K562 (cell line): ENCODE measurements at regions of chr15 and their contacts with region 1.

Region 1: GRCh38 chr15:99104788-99105513 is at the start of gene SYNM:
- DNase-seq: peak; percentile 56 to 85 (median 84)
- ATAC-seq: peak; percentile 93
- H3K4me3 ChIP-seq: peak within 1 kb of the TSS; percentile 8; the same call in 1 of the 2 replicates
- H3K27ac ChIP-seq: no peak within 1 kb of the TSS
- H3K4me1 ChIP-seq: peaks cover 0 to 17% of the 10 kb centered on the region in 2 experiments; a peak in 2 of 5 replicates
- H3K27me3 ChIP-seq: peaks cover 4 to 34% of the 10 kb centered on the region in 2 experiments; a peak in 3 of 5 replicates
- CTCF ChIP-seq: peak; percentile 16 to 69 (median 56); a peak in 4 of 6 replicates
- EP300 ChIP-seq: no peak
- POLR2A ChIP-seq: no peak
- RAD21 ChIP-seq: peak; percentile 50 to 58
- polyA plus RNA-seq, gene SYNM: 0.01 TPM

Region 2: DNA sequence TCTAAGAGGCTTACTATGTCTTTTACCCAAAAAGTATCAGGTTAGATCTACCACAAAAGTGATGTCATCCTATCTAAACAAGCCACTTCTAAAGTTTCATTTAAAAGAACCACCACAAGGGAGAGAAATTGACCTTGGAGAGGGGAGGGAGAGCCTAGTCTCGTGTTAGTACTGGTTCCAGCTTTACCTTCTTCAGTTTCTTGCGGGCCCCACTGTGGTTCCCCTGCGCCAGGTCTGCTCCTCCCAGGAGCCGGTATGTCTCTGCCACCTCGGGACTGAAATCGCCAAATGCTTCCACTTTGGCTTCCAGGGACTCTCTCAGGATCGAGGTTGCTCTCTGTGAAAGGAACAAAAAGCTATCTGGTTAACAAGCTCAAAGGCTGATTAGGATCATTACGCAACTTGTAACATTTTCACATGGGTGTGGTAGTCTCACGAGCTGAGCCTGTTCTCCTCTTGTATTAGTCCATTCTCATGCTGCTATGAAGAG is 51.1 kb after region 1 on chr15:
- CTCF ChIA-PET with region 1: no interaction called
- POLR2A ChIA-PET with region 1: no interaction called
- in situ Hi-C with region 1: no loop called
- intact Hi-C with region 1: loop called (anchors 5 kb)
- DNase-seq: peak in 3 of 4 experiments; percentile 14 to 34 (median 22)
- ATAC-seq: peak; percentile 75
- H3K4me3 ChIP-seq: no peak overlapping the region
- H3K27ac ChIP-seq: 0 out of 3 replicates have a peak overlapping the region, but pooled peaks have one; percentile 37
- H3K4me1 ChIP-seq: peaks cover 0 to 2% of the 10 kb centered on the region in 2 experiments; a peak in 2 of 5 replicates
- H3K27me3 ChIP-seq: no peaks in the 10 kb centered on the region
- CTCF ChIP-seq: no peak
- EP300 ChIP-seq: no peak
- POLR2A ChIP-seq: no peak
- RAD21 ChIP-seq: no peak

Region 3: GRCh38 chr15:99169769-99170311 is 64.9 kb after region 1 on chr15:
- CTCF ChIA-PET with region 1: no interaction called
- POLR2A ChIA-PET with region 1: no interaction called
- in situ Hi-C with region 1: no loop called
- intact Hi-C with region 1: no loop called
- DNase-seq: no peak
- ATAC-seq: no peak
- H3K4me3 ChIP-seq: no peak overlapping the region
- H3K27ac ChIP-seq: no peak overlapping the region
- H3K4me1 ChIP-seq: peaks cover 0 to 2% of the 10 kb centered on the region in 2 experiments; a peak in 1 of 5 replicates
- H3K27me3 ChIP-seq: peaks cover 0 to 7% of the 10 kb centered on the region in 2 experiments; a peak in 1 of 5 replicates
- CTCF ChIP-seq: no peak
- EP300 ChIP-seq: no peak
- POLR2A ChIP-seq: no peak
- RAD21 ChIP-seq: no peak

Region 4: GRCh38 chr15:99213187-99213811 is 108.3 kb after region 1 on chr15:
- CTCF ChIA-PET with region 1: interaction called, 19 read pairs
- POLR2A ChIA-PET with region 1: interaction called, 3 read pairs
- in situ Hi-C with region 1: loop called (anchors 5 kb)
- intact Hi-C with region 1: loop called (anchors 1 kb)
- DNase-seq: peak; percentile 47 to 69 (median 50)
- ATAC-seq: peak; percentile 95
- H3K4me3 ChIP-seq: no peak overlapping the region
- H3K27ac ChIP-seq: no peak overlapping the region
- H3K4me1 ChIP-seq: no peaks in the 10 kb centered on the region
- H3K27me3 ChIP-seq: no peaks in the 10 kb centered on the region
- CTCF ChIP-seq: peak; percentile 76 to 89 (median 87)
- EP300 ChIP-seq: no peak
- POLR2A ChIP-seq: no peak
- RAD21 ChIP-seq: peak; percentile 77 to 91